Pancreas (tissue), 10 donors: ENCODE measurements at regions of chr10 and their contacts with region 1.

Region 1: DNA sequence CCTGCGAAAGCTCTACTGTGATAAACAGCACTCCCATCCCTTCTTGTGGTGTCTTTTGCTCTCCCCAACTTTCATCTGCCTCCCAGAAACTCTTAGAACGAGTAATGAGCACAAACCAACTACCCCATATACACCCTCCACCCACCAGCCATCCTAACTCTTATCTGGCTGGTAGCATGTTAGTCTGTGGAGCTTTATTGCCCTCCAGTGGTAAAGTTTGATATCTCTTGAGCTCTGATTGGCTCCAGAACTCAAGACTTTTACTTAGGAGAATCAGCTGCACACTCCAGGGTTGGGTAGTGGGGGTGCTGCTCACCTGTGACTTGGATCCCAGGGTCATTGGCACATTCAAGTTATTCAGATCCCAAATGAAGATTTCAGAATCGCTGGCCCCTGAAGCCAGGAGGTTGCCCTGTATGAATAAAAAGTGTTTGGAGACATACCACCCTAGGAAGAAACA is 10.9 kb downstream of the SEC31B start:
- DNase-seq: no peak
- ATAC-seq: peak; percentile 35 to 81 (median 72)
- H3K4me3 ChIP-seq: no peak overlapping the region
- H3K27ac ChIP-seq: no peak overlapping the region
- H3K4me1 ChIP-seq: no peaks in the 10 kb centered on the region
- H3K27me3 ChIP-seq: no peaks in the 10 kb centered on the region
- CTCF ChIP-seq: peak in 2 of 4 donors; percentile 17 to 20

Region 2: GRCh38 chr10:100403734-100404133 is 105.0 kb before region 1 on chr10:
- intact Hi-C with region 1: no loop called
- DNase-seq: no peak
- ATAC-seq: no peak
- H3K4me3 ChIP-seq: no peak overlapping the region
- H3K27ac ChIP-seq: no peak overlapping the region
- H3K4me1 ChIP-seq: no peaks in the 10 kb centered on the region
- H3K27me3 ChIP-seq: no peaks in the 10 kb centered on the region
- CTCF ChIP-seq: no peak

Region 3: DNA sequence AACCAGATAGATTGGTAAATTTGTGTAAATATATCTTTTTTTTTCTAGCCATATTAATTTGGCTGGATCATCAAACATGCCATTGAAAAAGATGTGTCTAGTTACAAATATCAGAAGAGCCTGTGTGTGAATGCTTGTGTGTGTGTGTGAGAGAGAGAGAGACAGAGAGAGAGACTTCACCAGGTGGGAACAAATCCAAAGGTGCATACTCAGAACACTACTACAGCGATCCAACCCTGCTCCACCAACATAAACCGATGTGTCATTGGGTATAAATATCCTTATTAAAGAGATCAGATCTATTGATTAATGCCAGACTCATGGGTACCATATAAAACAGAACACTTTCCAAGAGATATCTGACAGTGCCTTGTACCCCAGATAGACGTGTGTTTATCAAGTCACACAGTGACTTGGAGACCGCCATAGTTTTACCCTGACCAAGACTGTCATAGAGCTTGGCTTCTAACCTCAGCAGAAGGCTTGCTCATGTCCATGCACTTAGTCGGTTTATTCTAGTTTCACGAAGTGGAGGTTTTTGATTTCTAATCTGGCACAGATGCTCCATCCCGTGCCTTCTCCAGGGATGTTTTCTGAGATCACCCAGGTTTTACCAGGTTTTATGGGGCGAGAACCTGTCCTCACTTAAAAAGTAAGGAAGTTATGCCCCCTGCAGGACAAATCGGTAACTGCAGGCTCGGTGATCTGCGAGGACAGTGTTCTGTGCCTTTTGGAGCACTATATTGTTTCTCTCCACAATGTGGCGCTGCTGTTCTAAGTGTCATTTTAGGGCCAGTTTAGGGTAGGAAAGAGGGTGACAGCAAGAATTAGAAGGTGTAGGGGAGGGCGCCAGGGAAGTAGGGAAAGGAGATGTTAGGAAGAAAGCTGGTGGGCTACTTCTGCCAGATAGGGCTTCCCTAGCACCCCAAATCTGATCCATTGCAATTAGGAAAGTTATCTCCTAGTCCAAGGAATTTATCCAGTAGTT is 75.2 kb before region 1 on chr10:
- intact Hi-C with region 1: loop called in 1 of 3 experiments (anchors 5 kb)
- DNase-seq: peak; percentile 85 to 98 (median 94)
- ATAC-seq: peak; percentile 95 to 100 (median 98)
- H3K4me3 ChIP-seq: no peak overlapping the region
- H3K27ac ChIP-seq: no peak overlapping the region
- H3K4me1 ChIP-seq: no peaks in the 10 kb centered on the region
- H3K27me3 ChIP-seq: peaks cover 0 to 5% (median 0%) of the 10 kb centered on the region in 4 donors
- CTCF ChIP-seq: peak; percentile 95 to 99 (median 98)

Region 4: GRCh38 chr10:100743626-100744135 is 235.0 kb after region 1 on chr10:
- intact Hi-C with region 1: no loop called
- DNase-seq: peak in 2 of 6 donors; percentile 33 to 53
- ATAC-seq: peak; percentile 74 to 84 (median 78)
- H3K4me3 ChIP-seq: no peak overlapping the region
- H3K27ac ChIP-seq: no peak overlapping the region
- H3K4me1 ChIP-seq: peaks cover 5 to 30% (median 5%) of the 10 kb centered on the region in 3 donors
- H3K27me3 ChIP-seq: peaks cover 0 to 52% (median 22%) of the 10 kb centered on the region in 4 donors
- CTCF ChIP-seq: peak; percentile 25 to 51 (median 42)